ENCODE measurements at regions of chr16 and their contacts with region 1.

Region 1: DNA sequence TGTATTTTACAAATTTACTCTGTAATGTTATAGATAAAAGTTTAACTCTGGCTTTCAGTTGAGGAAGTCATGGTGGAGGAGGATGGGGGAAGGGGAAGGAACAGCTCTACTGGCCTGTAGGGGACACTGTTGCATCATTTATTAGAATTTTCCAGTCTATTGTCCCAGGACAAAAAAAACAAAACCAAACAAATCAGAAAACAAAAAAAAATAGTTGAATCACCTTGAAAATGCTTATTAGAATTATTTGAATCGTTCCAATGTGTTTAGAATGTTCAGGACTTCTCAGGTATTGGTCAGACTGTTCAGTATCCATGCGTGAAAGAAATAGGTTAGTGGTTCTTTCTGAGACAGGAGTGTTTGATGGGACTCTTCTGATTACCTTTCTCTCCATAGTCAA is 242.0 kb downstream of the FTO start:
- DNase-seq: no peak
- ATAC-seq: peak; percentile 81 to 83
- H3K4me3 ChIP-seq: no peak overlapping the region
- H3K27ac ChIP-seq: no peak overlapping the region
- H3K4me1 ChIP-seq: peaks cover 6 to 7% of the 10 kb centered on the region in 2 donors
- H3K27me3 ChIP-seq: no peaks in the 10 kb centered on the region
- CTCF ChIP-seq: peak; percentile 61 to 80 (median 70)
- POLR2A ChIP-seq: no peak

Region 2: GRCh38 chr16:54077050-54077821 is 131.2 kb after region 1 on chr16:
- in situ Hi-C with region 1: no loop called
- intact Hi-C with region 1: loop called (anchors 10 kb)
- DNase-seq: no peak
- ATAC-seq: no peak
- H3K4me3 ChIP-seq: no peak overlapping the region
- H3K27ac ChIP-seq: no peak overlapping the region
- H3K4me1 ChIP-seq: no peaks in the 10 kb centered on the region
- H3K27me3 ChIP-seq: no peaks in the 10 kb centered on the region
- CTCF ChIP-seq: no peak
- POLR2A ChIP-seq: no peak

Region 3: GRCh38 chr16:54098247-54098646 is 152.3 kb after region 1 on chr16:
- in situ Hi-C with region 1: no loop called
- intact Hi-C with region 1: no loop called
- DNase-seq: no peak
- ATAC-seq: no peak
- H3K4me3 ChIP-seq: no peak overlapping the region
- H3K27ac ChIP-seq: no peak overlapping the region
- H3K4me1 ChIP-seq: no peaks in the 10 kb centered on the region
- H3K27me3 ChIP-seq: no peaks in the 10 kb centered on the region
- CTCF ChIP-seq: no peak
- POLR2A ChIP-seq: no peak

Region 4: DNA sequence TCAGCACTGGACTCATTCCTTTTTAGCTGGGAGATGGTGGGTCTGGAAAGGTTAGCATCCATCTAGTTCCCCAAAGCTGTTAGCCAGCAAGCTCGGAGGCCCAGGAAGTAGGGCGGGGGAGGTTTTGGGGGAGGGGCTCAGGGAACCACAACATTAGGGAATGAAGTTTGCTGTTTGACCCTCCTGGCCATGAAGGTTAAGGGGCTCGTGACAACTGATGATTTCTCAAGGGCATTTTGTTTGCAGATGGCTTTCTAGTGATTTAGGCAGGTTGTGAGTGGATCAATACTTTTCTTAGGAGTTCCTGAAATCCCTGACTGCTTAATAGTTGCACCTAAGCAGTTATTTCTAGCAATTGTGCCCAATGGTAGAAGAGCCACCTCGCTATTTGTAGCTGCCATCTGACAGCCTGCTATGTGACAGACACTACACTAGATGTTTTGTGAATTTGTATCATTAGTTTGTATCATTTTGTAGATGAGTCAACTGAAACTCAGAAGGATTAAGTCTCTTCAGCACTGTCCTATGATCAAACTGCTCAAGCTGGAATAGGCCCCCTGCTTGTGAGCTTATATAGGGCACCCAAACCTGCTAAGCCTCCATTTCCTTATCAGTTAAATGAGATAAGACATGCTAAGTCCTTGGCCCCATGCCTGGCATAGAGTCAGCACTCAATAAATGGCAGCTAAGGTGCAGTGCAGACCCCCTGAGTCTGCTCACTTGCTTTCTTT is 194.2 kb after region 1 on chr16:
- in situ Hi-C with region 1: no loop called
- intact Hi-C with region 1: no loop called
- DNase-seq: no peak
- ATAC-seq: no peak
- H3K4me3 ChIP-seq: no peak overlapping the region
- H3K27ac ChIP-seq: no peak overlapping the region
- H3K4me1 ChIP-seq: no peaks in the 10 kb centered on the region
- H3K27me3 ChIP-seq: no peaks in the 10 kb centered on the region
- CTCF ChIP-seq: no peak
- POLR2A ChIP-seq: no peak

Region 5: DNA sequence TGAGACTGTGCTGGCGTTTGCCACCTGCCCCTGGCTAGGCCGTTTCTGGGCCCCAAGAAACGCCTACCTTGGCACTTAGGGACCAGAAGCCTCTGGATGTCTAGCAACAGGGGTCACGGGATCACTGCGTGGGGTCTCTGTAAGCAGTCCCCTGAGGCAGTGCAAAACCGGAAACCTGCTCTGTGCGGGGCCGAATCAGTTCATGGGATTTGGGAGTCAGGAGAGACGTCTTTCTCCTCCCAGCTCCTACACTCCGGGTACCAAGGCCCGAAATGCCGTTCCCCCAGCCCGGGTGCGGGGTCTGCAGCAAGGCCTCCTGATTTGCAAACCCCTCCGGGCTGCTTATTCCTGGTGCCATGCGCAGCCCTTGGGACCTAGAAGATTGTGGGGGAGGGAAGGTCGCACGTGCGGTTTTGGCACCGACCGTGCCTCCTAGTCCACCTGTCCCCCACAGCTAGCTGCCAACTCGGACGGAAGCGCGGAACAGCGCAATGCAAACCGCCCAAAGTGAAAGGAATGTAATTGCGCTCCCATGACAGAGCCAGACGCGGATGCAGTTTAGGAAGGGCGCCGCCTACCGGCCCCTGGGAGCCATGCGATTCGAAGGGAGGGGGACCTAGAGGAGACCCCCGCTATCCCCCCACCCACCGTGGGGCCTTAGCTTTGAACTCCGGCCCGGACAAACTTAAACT is 991.1 kb after region 1 on chr16:
- in situ Hi-C with region 1: no loop called
- intact Hi-C with region 1: loop called (anchors 5 kb)
- DNase-seq: no peak
- ATAC-seq: peak; percentile 18 to 30
- H3K4me3 ChIP-seq: peak overlapping the region; percentile 31 to 52 (median 40)
- H3K27ac ChIP-seq: peak overlapping the region in 2 of 4 donors; percentile 1 to 42
- H3K4me1 ChIP-seq: peaks cover 8 to 25% of the 10 kb centered on the region in 2 donors
- H3K27me3 ChIP-seq: peaks cover 81 to 93% (median 91%) of the 10 kb centered on the region in 3 donors
- CTCF ChIP-seq: peak in 3 of 5 experiments; percentile 36 to 51 (median 46)
- POLR2A ChIP-seq: no peak

Region 6: DNA sequence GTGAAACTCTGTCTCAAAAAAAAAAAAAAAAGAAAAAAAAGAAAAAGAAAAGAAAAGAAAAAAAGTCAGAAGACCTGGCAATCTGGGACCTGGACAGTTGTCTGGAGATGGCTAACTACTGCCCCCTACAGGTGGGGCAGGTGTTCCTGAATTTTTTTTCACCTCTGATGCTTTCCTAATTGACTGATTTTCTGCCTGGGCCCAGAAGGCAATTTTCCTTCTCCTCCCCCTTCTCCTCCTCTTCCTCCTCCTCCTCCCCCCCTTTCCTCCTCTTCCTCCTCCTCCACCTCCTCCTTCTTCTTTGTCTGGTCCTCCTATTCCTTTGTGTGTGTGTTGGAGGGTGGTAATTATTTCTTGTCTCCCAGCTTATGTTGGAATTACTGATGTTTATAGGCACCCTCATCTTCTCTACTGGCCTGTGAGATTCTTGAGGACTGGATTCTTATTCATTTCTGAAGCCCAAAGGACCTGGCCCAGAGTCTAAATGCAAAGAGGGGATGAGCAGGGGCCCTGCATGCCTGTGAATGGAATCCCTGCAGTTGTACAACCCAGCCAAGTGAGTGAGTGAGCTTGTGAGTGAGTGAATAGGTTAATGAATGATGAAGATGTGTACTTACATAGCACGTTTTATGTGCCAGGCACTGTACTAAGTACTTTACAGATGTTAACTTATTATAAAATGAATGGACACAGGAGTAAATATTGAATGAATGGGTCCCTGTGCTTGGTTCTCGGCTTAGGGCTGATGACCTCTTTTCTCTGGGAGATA is 1011.6 kb after region 1 on chr16:
- in situ Hi-C with region 1: loop called in 1 of 4 experiments (anchors 25 kb)
- intact Hi-C with region 1: no loop called
- DNase-seq: no peak
- ATAC-seq: no peak
- H3K4me3 ChIP-seq: no peak overlapping the region
- H3K27ac ChIP-seq: no peak overlapping the region
- H3K4me1 ChIP-seq: no peaks in the 10 kb centered on the region
- H3K27me3 ChIP-seq: peaks cover 0 to 4% (median 0%) of the 10 kb centered on the region in 3 donors
- CTCF ChIP-seq: peak in 4 of 5 experiments; percentile 38 to 59 (median 41)
- POLR2A ChIP-seq: no peak

Measured in gastrocnemius medialis (tissue), 4 donors.